SK-N-SH (cell line): ENCODE measurements at regions of chr17 and their contacts with region 1.

Region 1: DNA sequence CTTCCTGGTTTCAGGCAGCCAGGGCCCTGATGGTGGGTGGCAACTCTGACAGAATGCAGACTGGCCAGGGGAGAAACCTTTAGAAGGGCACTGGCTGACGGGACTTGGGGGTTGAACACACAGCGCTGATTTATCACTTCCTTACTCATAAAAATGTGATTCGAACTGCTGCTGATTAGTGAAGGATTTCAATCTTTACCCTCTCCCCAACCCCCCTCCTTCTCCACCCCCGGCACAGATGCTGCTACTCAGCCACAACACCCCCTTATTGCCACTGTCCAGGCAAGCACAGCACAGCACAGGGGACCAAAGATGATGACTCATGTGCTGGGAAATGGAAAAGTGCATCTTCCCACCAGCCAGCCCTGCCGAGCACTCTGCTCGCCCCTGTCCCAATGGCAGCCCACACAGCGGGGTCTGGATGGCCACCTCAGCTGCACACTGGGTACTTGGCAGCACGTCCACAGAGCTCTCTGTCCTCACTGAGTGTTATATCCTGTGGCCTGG is 70.1 kb downstream of the SMG6 start:
- DNase-seq: no peak
- H3K4me3 ChIP-seq: no peak overlapping the region
- H3K27ac ChIP-seq: peak overlapping the region; percentile 76 to 93
- H3K4me1 ChIP-seq: peaks cover 21 to 37% of the 10 kb centered on the region in 2 experiments
- H3K27me3 ChIP-seq: no peaks in the 10 kb centered on the region
- CTCF ChIP-seq: no peak
- EP300 ChIP-seq: no peak
- RAD21 ChIP-seq: no peak

Region 2: DNA sequence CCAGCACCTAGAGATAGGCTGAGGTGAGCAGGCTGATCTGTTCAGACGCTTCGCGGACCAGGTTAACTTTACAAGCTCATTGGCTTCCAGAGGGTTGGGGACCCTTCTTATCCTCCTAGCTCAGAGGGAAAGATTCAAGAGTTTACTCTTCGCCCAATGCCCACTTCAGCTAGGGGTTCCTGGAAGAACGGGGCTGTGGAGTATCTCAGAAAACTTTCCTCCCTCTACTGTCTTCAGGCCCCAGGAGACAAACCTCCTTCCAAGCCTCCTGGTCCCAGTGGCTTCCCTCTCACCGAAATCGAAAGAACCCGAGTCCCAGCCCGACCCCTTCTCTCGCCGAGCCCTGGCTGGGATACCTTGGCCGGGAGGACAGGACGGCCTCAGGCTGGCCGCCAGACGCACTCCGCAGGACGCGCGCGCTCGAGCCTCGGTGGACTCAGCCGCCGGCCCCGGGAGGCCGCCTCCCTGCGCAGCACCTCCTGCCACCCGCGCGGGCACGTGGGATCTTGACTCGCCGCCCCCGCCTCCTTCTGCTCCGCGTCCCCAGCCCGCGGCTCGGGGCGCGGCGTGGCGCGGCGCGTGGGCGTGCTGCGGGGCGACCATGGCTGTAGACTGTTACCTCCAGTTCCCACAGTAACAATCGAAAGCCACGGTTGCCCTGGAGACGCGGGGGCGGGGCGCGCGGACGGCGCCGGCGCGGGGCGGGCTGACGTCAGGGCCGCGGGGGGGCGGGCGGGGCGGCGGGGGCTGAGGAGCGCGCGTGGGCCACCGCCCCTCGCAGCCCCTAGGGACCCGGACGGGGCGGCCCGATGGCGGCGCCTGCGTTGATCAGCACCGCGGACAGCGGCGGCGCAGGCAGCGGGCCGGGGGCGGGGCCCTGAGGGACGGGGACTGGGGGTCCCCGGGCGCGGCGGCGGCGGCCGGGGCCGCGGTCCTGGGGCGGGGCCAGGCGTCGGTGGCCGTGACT is 183.9 kb before region 1 on chr17:
- CTCF ChIA-PET with region 1: interaction called, 87 read pairs
- POLR2A ChIA-PET with region 1: no interaction called
- DNase-seq: peak; percentile 95
- H3K4me3 ChIP-seq: peak overlapping the region; percentile 75 to 80
- H3K27ac ChIP-seq: peak overlapping the region; percentile 60 to 72
- H3K4me1 ChIP-seq: peaks cover 4 to 15% of the 10 kb centered on the region in 2 experiments; a peak in 2 of 4 replicates
- H3K27me3 ChIP-seq: no peaks in the 10 kb centered on the region
- CTCF ChIP-seq: no peak
- EP300 ChIP-seq: no peak
- RAD21 ChIP-seq: no peak

Region 3: DNA sequence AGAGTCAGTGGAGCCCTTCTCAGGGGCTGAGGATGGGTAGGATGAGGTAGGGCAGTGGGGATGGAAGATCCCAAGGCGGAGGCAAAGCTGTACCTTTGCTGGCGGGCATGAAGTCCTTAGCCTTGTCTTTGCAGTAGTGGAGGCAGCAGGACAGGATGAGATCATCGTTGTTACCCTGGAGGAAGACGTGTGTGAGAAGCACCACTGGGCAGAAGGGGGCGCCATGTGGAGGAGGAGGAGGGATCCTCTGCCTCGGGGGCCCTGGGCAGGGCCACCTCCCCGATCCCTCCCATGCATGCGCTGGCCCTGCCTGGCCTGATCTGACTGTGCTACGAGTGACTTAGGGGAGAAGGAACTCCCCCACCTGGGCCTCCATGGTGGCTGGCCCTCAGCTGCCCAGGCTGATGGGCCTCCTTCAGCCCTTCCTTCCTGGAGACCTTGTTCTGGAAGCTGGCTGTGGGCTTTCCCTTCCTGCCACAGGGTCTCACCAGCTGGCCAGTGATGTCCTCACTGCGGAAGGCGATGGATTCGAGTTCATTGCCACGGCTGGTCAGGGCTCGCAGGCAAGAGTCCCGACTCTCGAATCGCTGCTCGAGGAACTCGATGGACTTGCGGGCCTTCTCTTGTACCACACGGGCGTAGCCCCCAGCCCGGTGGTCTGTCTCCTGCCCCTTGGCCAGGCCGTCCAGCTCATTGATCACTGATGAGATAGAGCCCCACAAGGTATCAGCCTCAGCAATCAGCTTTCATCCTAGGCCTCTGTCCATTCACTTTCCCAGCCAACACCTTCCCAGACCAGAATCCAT is 168.3 kb before region 1 on chr17:
- CTCF ChIA-PET with region 1: interaction called, 10 read pairs
- POLR2A ChIA-PET with region 1: no interaction called
- DNase-seq: peak; percentile 66
- H3K4me3 ChIP-seq: no peak overlapping the region
- H3K27ac ChIP-seq: peak overlapping the region in 1 of 2 experiments; percentile 69; a peak in 3 of 4 replicates
- H3K4me1 ChIP-seq: peaks cover 40 to 43% of the 10 kb centered on the region in 2 experiments; a peak in 3 of 4 replicates
- H3K27me3 ChIP-seq: no peaks in the 10 kb centered on the region
- CTCF ChIP-seq: peak; percentile 54
- EP300 ChIP-seq: no peak
- RAD21 ChIP-seq: peak; percentile 39

Region 4: DNA sequence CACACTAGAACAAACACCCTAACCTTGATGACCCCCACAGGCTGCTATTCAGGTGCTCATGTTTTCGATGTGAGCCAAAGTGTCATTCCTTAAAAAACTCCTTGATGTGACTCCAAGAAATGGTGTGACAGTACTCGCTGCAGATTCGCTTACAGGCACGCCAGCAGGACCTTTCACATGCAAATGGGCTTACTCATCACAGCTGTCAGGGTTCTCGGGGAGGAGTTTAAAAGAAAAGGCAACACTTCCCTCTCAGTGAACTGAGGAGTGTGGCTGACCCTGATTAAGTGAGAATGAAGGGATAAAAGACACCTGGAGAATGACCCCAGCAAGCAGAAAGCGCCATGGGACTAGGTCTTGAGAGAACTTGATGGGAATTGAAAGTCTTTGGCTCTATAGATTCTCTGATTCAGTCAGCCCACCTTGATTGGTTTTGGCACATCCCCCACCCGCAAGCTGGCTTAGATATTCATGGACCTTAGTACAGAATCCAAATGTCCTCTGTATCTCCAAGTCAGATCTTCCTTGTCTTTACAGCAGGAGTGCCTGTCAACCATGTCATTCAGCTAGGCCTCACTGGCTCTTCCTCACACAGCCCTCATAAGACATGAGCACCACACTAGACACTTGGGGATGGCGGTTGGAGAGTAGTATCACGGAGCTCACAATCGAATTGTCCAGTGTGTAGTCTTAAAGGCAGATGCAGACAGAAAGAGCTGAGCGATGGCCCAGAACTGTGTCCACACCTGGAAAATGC is 96.0 kb before region 1 on chr17:
- CTCF ChIA-PET with region 1: interaction called, 12 read pairs
- POLR2A ChIA-PET with region 1: no interaction called
- DNase-seq: no peak
- H3K4me3 ChIP-seq: no peak overlapping the region
- H3K27ac ChIP-seq: peak overlapping the region; percentile 69 to 85; a peak in 3 of 4 replicates
- H3K4me1 ChIP-seq: peaks cover 24 to 26% of the 10 kb centered on the region in 2 experiments
- H3K27me3 ChIP-seq: no peaks in the 10 kb centered on the region
- CTCF ChIP-seq: no peak
- EP300 ChIP-seq: no peak
- RAD21 ChIP-seq: no peak

Region 5: DNA sequence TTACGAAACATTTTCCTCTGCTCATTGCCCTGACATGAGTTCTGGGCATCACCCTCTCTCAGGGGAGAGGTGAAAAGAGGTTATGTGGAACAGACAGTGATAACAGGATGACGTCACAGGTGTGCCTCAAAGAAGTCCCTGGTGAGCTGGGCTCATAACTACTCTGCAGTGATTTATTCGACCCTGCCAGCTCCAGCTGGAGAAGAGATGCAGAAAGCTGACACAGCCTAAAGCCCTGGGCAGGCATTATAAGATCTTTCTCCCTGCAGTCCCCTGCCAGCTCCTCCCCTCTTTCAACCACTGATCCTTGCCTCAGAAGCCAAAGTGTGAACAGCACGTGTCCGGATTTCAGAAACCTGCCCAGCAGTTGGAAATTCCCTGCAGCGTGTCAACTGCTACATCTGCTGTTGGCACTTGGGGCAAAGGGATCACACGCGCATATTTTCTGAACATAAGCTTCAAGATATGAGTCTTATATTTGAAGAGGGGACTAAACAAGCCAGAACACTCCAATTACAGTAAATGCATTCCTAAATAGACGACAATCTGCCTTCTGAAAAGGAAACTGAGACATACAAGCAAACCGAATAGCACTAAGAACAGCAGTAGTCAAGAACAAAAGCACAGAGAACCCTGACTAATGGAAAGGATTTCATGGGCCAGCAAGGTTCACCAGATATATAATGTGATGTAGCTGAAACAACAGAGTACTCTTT is 10.4 kb before region 1 on chr17:
- CTCF ChIA-PET with region 1: interaction called, 11 read pairs
- POLR2A ChIA-PET with region 1: interaction called, 3 read pairs
- DNase-seq: no peak
- H3K4me3 ChIP-seq: no peak overlapping the region
- H3K27ac ChIP-seq: peak overlapping the region in 1 of 2 experiments; percentile 24; a peak in 1 of 4 replicates
- H3K4me1 ChIP-seq: peaks cover 7 to 15% of the 10 kb centered on the region in 2 experiments; a peak in 3 of 4 replicates
- H3K27me3 ChIP-seq: no peaks in the 10 kb centered on the region
- CTCF ChIP-seq: no peak
- EP300 ChIP-seq: no peak
- RAD21 ChIP-seq: no peak